MCF 10A (cell line): ENCODE measurements at regions of chr3 and their contacts with region 1.

Region 1: DNA sequence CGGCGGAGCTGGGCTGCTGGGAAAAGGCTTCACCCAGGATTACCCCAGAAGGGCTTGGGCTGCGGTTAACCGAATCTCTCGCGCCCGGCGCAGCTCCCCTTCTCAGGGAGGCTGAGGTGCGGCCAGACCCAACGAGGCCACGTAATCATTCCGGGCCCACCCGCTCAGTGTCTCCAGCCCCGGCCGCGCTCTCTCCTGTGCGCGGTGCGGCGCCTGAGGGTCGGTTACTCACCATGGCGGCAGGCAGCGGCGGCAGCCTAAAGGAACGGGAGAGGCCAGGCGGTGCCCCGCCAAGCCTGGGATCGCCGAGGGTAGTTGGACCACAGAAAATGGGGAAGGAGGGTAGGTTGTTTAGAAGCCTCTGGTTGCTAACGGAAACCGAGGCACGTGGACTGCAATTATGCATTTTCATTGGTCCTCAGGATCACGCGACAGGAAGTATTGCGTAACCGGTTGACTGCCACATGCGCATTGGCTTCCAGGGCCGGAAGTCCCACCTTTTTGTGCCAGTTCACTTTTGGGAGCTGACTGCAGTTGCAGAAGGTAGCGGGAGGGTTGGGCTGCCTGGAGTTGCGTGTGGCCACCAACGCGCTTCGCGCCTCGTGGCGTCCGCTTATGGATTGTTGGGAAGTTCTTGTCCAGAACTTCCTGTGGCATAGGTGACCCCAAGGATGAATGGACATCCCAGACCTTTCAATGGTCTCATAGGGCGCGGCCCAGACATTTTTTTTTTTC is at the start of gene LZTFL1:
- DNase-seq: peak; percentile 96
- H3K4me3 Mint-ChIP-seq: peak within 1 kb of the TSS; percentile 94
- H3K27ac Mint-ChIP-seq: peak within 1 kb of the TSS; percentile 98
- H3K4me1 Mint-ChIP-seq: peaks cover 25% of the 10 kb centered on the region
- H3K27me3 Mint-ChIP-seq: peaks cover 40% of the 10 kb centered on the region
- CTCF ChIP-seq: no peak
- total RNA-seq, gene LZTFL1: 30.5 and 39.5 TPM in 2 replicates

Region 2: DNA sequence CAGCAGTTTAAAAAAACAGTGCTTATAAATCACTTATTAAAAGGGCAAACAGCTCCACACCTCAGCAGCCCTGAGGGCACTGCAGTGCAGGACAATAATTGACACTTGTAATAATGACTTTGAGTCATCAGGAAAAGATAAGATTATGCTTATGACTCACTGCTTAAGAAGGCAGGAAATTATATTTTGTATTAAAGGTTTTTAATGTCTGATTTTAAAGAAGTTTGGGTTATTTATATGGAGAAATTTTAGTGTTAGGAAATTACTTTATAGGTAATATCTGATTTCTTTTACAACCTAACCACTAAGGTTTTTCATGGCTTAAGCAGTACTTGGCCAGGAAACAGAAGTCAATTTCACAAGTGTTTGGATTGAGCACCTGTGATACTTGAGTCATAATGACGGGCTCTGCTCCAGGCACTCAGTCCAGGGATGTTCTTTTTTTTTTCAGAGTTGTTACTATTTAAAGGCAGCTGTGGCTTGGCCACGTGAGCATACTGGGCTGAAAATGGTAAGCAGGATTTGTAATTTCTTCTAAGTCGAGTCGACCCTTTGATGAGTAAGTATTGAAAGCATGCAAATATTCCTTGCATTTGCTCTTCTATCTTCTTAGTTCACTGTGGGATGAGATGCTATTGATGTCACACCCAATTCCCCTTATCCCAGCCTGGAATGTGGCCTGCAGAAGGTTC is 23.9 kb before region 1 on chr3:
- CTCF ChIA-PET with region 1: interaction called, 3 read pairs
- POLR2A ChIA-PET with region 1: interaction called, 26 read pairs
- intact Hi-C with region 1: no loop called
- DNase-seq: peak; percentile 97
- H3K4me3 Mint-ChIP-seq: no peak overlapping the region
- H3K27ac Mint-ChIP-seq: peak overlapping the region; percentile 73
- H3K4me1 Mint-ChIP-seq: peaks cover 28% of the 10 kb centered on the region
- H3K27me3 Mint-ChIP-seq: no peaks in the 10 kb centered on the region
- CTCF ChIP-seq: no peak

Region 3: DNA sequence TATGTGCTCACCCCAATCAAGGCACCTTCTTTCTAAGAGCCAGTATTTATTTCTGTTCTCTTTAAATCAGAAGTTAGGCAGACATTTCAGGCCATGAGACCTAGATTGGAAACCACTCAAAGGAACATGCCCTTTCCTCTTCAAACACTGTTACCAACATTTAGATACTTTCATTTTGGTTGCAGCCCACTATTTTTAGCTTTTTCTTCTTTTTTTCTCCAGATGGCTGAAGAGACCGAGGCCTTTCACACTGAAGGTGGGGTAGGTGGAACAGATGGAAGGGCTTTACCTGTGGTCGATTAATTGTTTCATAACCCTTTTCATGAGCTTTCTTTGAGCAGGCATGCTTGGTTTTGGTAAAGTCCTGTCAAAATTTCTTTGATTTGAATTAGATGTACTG is 10.9 kb after region 1 on chr3:
- CTCF ChIA-PET with region 1: no interaction called
- POLR2A ChIA-PET with region 1: interaction called, 12 read pairs
- intact Hi-C with region 1: no loop called
- DNase-seq: no peak
- H3K4me3 Mint-ChIP-seq: no peak overlapping the region
- H3K27ac Mint-ChIP-seq: no peak overlapping the region
- H3K4me1 Mint-ChIP-seq: no peaks in the 10 kb centered on the region
- H3K27me3 Mint-ChIP-seq: peaks cover 94% of the 10 kb centered on the region
- CTCF ChIP-seq: no peak

Region 4: DNA sequence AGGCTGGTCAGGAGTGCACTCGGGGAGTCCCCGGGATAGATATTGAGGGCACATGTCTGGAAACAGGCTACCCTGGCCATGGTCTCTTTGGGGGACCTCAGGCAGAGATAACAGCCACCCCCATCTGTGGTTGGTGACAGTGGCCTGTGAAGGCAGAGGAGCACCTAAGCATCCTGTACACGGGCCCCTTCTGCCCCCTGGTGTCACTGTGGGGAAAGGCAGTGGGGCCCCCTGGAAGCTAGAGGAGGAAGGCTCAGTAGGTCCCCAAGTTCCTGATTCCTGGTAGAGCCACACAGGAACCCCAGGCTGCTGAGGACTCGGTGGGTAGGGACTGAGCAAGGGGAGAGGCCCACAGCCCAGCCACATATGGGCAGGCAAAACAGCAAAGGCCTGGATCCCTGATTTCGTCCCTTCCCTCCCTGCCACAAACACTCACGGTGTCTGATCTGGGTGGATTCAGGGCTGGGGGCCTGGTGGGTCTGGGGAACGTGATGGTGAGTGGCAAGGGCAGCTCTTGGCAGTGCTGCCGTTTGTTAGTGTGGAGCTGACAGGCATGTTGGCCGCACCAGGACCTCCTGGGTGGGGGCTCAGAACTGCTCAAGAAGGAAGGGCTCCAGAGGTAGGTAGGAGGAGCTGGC is 87.2 kb after region 1 on chr3:
- CTCF ChIA-PET with region 1: interaction called, 7 read pairs
- POLR2A ChIA-PET with region 1: no interaction called
- intact Hi-C with region 1: loop called (anchors 5 kb)
- DNase-seq: peak; percentile 51
- H3K4me3 Mint-ChIP-seq: no peak overlapping the region
- H3K27ac Mint-ChIP-seq: no peak overlapping the region
- H3K4me1 Mint-ChIP-seq: no peaks in the 10 kb centered on the region
- H3K27me3 Mint-ChIP-seq: no peaks in the 10 kb centered on the region
- CTCF ChIP-seq: peak; percentile 61

Region 5: DNA sequence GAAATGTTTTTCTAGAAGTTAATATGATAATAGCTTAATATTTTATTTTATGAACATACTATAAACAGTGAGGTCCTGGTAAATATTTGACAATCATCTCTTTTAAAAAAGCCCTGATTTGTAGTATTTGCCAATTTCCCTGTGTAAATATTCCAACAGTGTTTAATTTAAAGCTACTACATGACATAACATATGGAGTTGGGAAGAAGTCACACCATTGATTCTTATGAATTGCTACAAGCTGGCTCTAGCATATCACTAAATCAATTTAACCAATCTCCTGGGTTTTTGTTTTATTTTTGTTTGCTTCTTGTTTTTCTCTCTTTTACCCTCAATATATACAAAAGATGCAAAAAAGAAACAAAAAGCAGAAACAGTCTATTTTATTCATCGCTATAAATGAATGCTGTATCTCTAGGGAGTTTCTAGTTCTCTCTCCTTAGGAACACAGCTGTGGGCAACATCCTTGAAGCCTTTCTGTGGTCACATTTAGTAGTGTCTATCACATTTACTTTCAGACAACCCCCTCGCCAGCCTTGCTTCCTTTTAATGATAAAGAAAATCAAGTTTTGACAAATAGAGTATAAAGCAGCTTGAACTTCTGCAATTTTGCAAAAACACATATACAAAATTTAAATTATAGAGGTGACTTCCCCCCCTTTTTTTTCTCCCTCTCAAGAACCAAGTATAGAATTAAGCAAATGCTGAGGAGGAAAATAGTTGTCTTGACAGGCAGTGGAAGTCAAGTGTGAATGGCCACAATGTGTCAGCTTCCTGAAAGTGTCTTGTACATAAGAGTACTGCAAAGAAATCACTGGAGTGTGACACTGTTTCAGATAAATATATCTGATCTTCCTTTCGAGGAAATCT is 344.8 kb after region 1 on chr3:
- CTCF ChIA-PET with region 1: no interaction called
- POLR2A ChIA-PET with region 1: no interaction called
- intact Hi-C with region 1: no loop called
- DNase-seq: no peak
- H3K4me3 Mint-ChIP-seq: no peak overlapping the region
- H3K27ac Mint-ChIP-seq: no peak overlapping the region
- H3K4me1 Mint-ChIP-seq: peaks cover 18% of the 10 kb centered on the region
- H3K27me3 Mint-ChIP-seq: no peaks in the 10 kb centered on the region
- CTCF ChIP-seq: no peak

Region 6: DNA sequence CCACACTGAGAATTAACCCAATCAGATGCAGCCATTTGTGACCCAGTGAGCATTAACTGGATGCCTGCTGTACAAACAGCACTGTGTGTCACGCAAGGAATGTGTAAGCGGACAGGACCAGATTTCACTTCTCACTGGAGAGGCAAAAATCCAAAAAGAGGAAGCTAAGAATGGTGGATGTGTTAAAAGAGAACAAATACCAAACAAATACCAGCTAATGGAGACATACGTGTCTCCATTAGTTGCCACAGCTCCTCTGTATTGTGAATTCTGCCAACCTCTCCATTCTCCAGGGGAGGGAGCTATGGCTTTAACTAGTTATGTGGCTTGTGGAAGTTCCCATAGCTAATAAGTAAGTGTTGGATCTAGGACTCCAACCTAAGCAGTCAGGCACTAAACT is 620.2 kb after region 1 on chr3:
- CTCF ChIA-PET with region 1: no interaction called
- POLR2A ChIA-PET with region 1: no interaction called
- intact Hi-C with region 1: no loop called
- DNase-seq: peak; percentile 22
- H3K4me3 Mint-ChIP-seq: no peak overlapping the region
- H3K27ac Mint-ChIP-seq: no peak overlapping the region
- H3K4me1 Mint-ChIP-seq: peaks cover 8% of the 10 kb centered on the region
- H3K27me3 Mint-ChIP-seq: peaks cover 70% of the 10 kb centered on the region
- CTCF ChIP-seq: no peak